Activated CD4-positive, alpha-beta memory T cell treated with anti-CD3 and anti-CD28 coated beads, Interleukin-2, amount 10 ng/mL, durations not matched to agents 7 days and 5 days (primary cell): ENCODE measurements at regions of chr19 and their contacts with region 1.

Region 1: DNA sequence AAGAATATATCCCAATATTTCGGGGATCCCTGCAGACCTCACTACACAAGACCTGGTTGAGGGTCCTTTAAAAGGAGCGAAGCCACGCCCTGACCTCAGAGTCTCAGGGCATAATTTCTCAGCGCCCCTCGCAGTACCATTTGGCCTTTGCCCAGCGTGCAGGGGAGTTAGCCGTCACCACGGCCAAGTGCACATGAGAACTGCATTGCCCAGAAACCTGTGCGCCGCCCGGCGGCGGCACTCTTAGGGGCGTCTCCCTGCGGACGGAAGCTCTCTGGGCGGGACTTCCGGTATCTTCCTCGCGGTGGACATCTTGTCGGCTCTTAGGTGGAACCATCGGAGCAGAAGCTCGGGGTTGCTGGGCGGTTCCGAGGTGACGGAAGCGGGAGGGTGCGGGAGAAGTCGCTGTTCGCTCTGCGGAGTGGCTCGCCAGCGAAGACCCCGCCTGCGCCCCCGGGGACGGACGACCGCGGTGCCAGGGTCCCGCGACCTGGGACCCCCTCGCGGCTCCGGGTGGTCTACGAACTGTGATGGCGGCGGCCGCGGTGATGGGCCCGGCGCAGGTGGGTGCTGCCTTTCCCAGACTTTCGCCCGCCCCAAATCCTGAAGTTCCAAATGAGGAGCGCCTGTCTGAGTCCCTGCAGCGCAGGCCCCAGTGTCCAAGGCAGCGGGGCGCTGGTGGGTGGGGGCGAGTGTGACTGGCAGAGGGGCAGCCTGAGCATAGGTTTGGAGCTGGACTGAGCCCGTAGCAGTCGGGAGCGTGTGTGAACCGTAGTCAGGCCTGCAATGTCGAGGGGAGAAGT is at the start of gene ZNF134:
- DNase-seq: peak; percentile 92
- H3K4me3 Mint-ChIP-seq: peak within 1 kb of the TSS; percentile 87
- H3K27ac Mint-ChIP-seq: peak within 1 kb of the TSS; percentile 72
- H3K4me1 Mint-ChIP-seq: peaks cover 18% of the 10 kb centered on the region
- H3K27me3 Mint-ChIP-seq: no peaks in the 10 kb centered on the region
- total RNA-seq, gene ZNF134: 14.7 to 16.7 TPM

Region 2: GRCh38 chr19:57632987-57633831 is 19.1 kb after region 1 on chr19 and contains the start of gene ZNF211:
- CTCF ChIA-PET with region 1: no interaction called
- POLR2A ChIA-PET with region 1: interaction called, 13 read pairs
- DNase-seq: peak; percentile 89
- H3K4me3 Mint-ChIP-seq: peak within 1 kb of the TSS; percentile 93
- H3K27ac Mint-ChIP-seq: peak within 1 kb of the TSS; percentile 75
- H3K4me1 Mint-ChIP-seq: peaks cover 19% of the 10 kb centered on the region
- H3K27me3 Mint-ChIP-seq: no peaks in the 10 kb centered on the region
- total RNA-seq, gene ZNF211: 17.8 to 20.4 TPM